ENCODE measurements at regions of chr5 and their contacts with region 1.

Region 1: GRCh38 chr5:17081142-17081541 is 136.3 kb upstream of the BASP1 start:
- DNase-seq: no peak
- H3K4me3 ChIP-seq: no peak overlapping the region
- H3K27ac ChIP-seq: peak overlapping the region; percentile 80
- H3K4me1 ChIP-seq: peaks cover 39% of the 10 kb centered on the region
- H3K27me3 ChIP-seq: no peaks in the 10 kb centered on the region
- CTCF ChIP-seq: no peak
- POLR2A ChIP-seq: no peak

Region 2: DNA sequence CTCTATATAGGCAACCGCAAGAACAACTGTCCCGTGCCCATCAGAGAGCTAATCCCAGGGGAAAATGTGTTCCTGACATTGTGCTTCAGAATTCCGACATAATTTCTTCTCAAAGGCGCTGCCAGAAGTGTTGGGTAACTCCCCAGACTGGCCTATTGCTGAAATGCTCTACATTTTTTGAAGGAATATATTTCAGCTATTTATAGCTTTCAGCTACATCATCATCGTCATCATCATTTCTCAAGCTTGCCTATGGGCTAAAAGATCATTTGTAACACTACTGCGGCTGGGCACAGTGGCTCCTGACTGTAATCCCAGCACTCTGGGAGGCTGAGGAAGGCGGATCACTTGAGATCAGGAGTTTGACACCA is 194.8 kb before region 1 on chr5:
- CTCF ChIA-PET with region 1: no interaction called
- POLR2A ChIA-PET with region 1: no interaction called
- dilution Hi-C with region 1: no loop called
- intact Hi-C with region 1: no loop called
- DNase-seq: no peak
- H3K4me3 ChIP-seq: no peak overlapping the region
- H3K27ac ChIP-seq: no peak overlapping the region
- H3K4me1 ChIP-seq: peaks cover 30% of the 10 kb centered on the region
- H3K27me3 ChIP-seq: no peaks in the 10 kb centered on the region
- CTCF ChIP-seq: no peak
- POLR2A ChIP-seq: no peak

Region 3: DNA sequence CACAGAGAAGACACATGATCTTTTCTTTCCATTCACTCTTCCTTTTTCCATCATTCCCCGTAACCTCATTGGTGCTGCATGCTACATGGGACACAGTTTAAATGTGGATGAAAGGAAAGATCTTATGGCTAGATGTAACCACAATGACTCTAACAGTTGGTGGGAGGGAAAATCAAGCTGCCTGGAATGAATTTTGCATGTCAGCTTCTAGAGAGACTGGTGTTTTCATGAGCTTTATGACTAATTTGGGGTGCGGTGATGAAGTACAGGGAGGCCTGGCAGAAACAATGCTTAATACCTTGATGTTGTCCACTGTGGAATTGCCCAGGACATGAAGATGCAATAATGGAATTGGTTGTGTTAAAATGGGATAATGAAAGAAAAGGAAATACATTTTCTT is 89.1 kb before region 1 on chr5:
- CTCF ChIA-PET with region 1: interaction called, 3 read pairs
- POLR2A ChIA-PET with region 1: no interaction called
- dilution Hi-C with region 1: no loop called
- intact Hi-C with region 1: loop called (anchors 1 kb)
- DNase-seq: peak; percentile 56
- H3K4me3 ChIP-seq: no peak overlapping the region
- H3K27ac ChIP-seq: peak overlapping the region; percentile 76
- H3K4me1 ChIP-seq: peaks cover 41% of the 10 kb centered on the region
- H3K27me3 ChIP-seq: no peaks in the 10 kb centered on the region
- CTCF ChIP-seq: no peak
- POLR2A ChIP-seq: no peak

Region 4: DNA sequence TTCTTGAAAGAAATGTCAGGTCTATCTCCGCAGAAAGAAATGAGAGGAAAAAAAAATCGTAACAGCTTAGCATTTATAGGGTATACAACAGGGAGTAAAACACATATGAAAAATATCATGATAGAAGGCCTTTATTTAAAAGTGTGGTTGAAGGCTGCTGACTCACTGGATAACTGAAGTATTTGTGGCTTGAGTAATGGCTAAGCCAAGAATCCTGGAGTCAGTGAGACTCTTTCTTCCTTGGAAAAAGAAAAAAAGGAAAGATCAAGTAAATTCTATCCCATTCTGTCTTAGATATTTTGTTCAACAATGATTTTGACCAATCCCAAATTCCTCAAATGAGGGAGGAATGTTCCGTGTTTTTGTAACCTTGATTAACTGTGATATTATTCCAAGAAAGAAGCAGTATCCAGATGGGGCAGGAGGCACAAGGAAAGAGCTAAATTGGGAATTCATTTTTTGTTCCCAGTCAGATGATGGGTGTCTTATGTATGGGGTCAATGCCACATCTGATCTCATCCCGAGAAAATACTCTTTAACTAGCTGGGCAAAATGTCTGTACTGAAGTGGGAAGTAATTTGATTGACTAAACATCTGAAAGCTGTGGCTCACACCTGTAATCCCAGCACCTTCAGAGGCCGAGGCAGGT is 80.7 kb before region 1 on chr5:
- CTCF ChIA-PET with region 1: interaction called, 3 read pairs
- POLR2A ChIA-PET with region 1: no interaction called
- dilution Hi-C with region 1: no loop called
- intact Hi-C with region 1: loop called (anchors 1 kb)
- DNase-seq: peak; percentile 77
- H3K4me3 ChIP-seq: no peak overlapping the region
- H3K27ac ChIP-seq: peak overlapping the region; percentile 97
- H3K4me1 ChIP-seq: peaks cover 32% of the 10 kb centered on the region
- H3K27me3 ChIP-seq: no peaks in the 10 kb centered on the region
- CTCF ChIP-seq: no peak
- POLR2A ChIP-seq: no peak

Region 5: DNA sequence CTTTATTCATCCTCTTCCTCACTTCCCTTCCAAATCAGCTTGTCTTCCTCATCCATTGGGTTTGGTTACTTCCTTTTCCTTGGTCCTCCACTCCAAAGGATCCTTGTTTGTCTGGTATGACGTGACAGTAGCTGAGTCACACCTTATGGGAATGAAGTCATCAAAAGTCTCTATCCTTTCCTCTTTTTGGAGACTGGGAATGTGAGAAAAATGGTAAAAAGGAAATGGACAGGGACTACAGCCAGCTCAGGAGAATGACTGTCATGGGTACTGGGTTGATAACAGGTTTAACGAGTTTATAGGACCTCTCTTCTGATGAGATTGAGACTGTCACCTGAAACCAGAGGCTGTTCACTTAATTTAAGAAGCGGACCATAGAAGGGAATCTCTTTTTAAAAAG is 68.8 kb before region 1 on chr5:
- CTCF ChIA-PET with region 1: no interaction called
- POLR2A ChIA-PET with region 1: no interaction called
- dilution Hi-C with region 1: no loop called
- intact Hi-C with region 1: no loop called
- DNase-seq: peak; percentile 59
- H3K4me3 ChIP-seq: no peak overlapping the region
- H3K27ac ChIP-seq: no peak overlapping the region
- H3K4me1 ChIP-seq: peaks cover 4% of the 10 kb centered on the region
- H3K27me3 ChIP-seq: no peaks in the 10 kb centered on the region
- CTCF ChIP-seq: no peak
- POLR2A ChIP-seq: no peak

Region 6: DNA sequence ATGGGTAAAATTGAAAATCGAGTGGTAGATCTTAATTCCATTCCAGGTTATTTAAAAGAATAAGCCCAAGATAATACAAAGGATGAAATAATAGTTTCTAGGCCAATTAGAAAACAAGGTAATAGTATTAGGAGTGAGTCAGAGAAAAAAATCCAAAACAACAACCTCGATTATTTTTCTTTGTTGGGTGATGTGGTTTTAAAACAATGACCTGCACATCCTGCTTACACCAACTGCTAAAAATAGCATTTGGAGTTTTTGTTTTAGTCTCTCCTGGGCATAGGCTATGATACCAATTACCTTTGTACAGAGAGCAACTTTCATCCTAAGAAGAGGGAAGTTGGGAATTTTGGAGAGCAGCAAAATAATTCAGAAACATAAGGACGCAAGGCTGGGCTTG is 43.4 kb before region 1 on chr5:
- CTCF ChIA-PET with region 1: no interaction called
- POLR2A ChIA-PET with region 1: no interaction called
- dilution Hi-C with region 1: no loop called
- intact Hi-C with region 1: loop called (anchors 1 kb)
- DNase-seq: peak; percentile 85
- H3K4me3 ChIP-seq: no peak overlapping the region
- H3K27ac ChIP-seq: peak overlapping the region; percentile 81
- H3K4me1 ChIP-seq: peaks cover 19% of the 10 kb centered on the region
- H3K27me3 ChIP-seq: no peaks in the 10 kb centered on the region
- CTCF ChIP-seq: no peak
- POLR2A ChIP-seq: no peak

Region 7: DNA sequence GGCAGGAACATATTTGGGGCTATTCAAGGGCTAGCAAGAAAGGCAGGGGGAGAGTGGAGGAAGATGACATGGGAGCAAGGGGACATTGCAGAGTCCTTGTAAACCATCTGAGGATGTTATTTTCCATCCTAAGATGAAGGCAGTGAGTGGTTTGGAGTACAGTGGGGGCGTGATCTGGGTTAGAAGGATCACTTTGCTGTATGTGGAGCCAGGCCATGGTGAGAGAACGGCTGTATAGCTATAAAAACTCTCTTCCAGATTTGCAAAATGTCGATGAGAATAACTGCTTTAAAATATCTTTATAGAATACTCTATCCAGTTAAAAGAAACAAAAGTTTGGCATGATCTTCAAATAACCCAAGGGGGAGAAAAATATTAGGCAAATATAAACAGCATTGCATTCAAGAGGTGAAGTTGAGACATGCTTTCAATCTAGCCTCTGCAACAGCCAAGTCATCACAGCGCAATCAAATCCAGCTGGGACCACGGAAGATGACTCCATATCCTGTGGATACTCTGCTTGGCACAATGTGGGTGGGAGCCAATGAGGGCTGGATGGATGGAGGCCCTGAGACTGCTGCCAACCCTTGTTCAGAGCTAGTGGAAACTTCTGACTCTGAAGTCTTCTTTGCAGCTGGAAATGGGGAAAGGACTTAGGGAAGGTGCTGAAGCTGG is 24.7 kb after region 1 on chr5:
- CTCF ChIA-PET with region 1: interaction called, 5 read pairs
- POLR2A ChIA-PET with region 1: no interaction called
- dilution Hi-C with region 1: no loop called
- intact Hi-C with region 1: loop called (anchors 1 kb)
- DNase-seq: peak; percentile 82
- H3K4me3 ChIP-seq: no peak overlapping the region
- H3K27ac ChIP-seq: peak overlapping the region; percentile 27
- H3K4me1 ChIP-seq: peaks cover 13% of the 10 kb centered on the region
- H3K27me3 ChIP-seq: no peaks in the 10 kb centered on the region
- CTCF ChIP-seq: no peak
- POLR2A ChIP-seq: no peak

Region 8: DNA sequence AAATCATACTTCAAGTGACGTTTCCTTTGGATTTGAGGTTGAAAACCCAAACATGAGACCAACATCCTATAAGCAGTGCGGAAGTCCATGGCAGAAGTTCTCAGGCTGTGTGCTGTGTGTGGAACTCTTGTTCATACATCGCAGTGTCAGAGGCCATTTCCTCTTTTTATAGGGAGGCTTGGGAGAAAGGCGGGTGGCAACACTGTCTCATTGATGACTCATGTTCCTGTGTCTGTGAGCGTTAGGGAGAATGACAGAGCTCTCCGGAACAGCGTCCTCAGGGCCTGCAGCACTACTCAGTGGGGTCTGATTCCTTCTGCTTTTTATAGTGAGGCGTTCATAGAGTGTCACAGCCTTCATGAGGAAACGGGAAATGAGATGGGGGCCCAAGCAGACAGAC is 37.5 kb after region 1 on chr5:
- CTCF ChIA-PET with region 1: interaction called, 5 read pairs
- POLR2A ChIA-PET with region 1: no interaction called
- dilution Hi-C with region 1: no loop called
- intact Hi-C with region 1: loop called (anchors 1 kb)
- DNase-seq: peak; percentile 99
- H3K4me3 ChIP-seq: no peak overlapping the region
- H3K27ac ChIP-seq: peak overlapping the region; percentile 85
- H3K4me1 ChIP-seq: peaks cover 32% of the 10 kb centered on the region
- H3K27me3 ChIP-seq: no peaks in the 10 kb centered on the region
- CTCF ChIP-seq: no peak
- POLR2A ChIP-seq: peak; percentile 64

Region 9: DNA sequence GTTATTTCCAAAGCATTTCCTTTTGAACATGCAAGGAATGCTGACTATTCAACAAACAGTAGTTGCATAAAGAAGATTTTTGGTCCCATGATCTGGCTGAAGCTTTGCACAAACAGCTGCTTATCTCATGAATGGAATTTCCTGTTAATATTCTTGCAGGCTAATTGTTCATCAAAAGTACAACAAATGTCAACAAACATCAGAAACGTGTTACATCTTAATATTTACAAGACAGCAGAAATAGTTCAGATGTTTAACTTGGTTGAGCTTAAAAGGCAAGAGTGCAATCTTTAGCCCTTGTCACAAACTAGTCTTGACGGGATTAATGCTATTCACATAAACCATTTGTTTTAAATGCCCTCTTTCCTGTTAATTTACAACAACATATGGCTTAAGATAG is 88.4 kb after region 1 on chr5:
- CTCF ChIA-PET with region 1: no interaction called
- POLR2A ChIA-PET with region 1: no interaction called
- dilution Hi-C with region 1: no loop called
- intact Hi-C with region 1: loop called (anchors 1 kb)
- DNase-seq: peak; percentile 91
- H3K4me3 ChIP-seq: peak overlapping the region in 1 of 3 experiments; percentile 15
- H3K27ac ChIP-seq: peak overlapping the region; percentile 85
- H3K4me1 ChIP-seq: peaks cover 34% of the 10 kb centered on the region
- H3K27me3 ChIP-seq: no peaks in the 10 kb centered on the region
- CTCF ChIP-seq: no peak
- POLR2A ChIP-seq: peak; percentile 50

Measured in endothelial cell of umbilical vein (primary cell).